ENCODE measurements at regions of chr17 and their contacts with region 1.

Region 1: DNA sequence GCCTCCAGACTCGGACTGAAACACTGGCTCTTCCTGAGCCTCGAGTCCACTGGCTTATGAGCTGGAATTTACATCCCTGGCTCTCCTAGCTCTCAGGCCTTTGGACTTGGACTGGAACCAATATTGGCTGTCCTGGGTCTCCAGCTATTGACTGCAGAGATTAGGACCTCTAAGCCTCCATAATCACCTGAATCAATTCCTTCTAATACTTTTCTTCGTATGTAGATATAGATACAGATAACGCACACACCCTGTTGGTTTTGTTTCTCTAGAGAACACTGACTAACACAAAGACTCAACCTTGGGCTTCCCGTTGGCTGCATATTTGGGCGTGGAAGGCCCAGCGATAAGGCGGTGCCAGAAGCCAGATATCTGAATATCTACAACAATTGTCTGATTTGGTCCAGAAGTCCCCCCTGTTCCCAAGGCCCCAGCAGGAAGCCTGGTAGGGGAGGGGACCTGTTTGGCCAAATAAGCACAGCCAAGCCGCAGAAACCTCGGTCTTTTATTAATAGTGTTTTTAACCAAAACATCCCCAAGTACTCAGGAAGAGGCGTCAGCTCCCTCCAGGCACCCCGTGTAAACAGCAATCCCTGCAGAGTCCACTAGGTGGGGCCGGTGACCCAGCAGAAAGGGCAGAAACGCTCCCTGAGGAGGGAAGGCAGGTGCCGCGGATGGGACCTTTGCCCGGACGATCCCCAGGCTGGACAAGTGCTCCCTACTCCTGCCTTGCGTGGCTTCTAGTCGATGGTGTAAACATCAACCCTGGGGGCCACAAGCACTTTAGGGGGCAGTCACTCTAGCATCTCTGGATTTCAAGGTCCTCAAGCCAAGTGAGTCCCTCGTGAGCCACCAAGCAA is 57.0 kb downstream of the ABR start:
- DNase-seq: peak; percentile 88
- ATAC-seq: peak; percentile 88
- H3K4me3 Mint-ChIP-seq: no peak overlapping the region
- H3K27ac Mint-ChIP-seq: no peak overlapping the region
- H3K4me1 Mint-ChIP-seq: peaks cover 28% of the 10 kb centered on the region
- H3K27me3 Mint-ChIP-seq: no peaks in the 10 kb centered on the region

Region 2: DNA sequence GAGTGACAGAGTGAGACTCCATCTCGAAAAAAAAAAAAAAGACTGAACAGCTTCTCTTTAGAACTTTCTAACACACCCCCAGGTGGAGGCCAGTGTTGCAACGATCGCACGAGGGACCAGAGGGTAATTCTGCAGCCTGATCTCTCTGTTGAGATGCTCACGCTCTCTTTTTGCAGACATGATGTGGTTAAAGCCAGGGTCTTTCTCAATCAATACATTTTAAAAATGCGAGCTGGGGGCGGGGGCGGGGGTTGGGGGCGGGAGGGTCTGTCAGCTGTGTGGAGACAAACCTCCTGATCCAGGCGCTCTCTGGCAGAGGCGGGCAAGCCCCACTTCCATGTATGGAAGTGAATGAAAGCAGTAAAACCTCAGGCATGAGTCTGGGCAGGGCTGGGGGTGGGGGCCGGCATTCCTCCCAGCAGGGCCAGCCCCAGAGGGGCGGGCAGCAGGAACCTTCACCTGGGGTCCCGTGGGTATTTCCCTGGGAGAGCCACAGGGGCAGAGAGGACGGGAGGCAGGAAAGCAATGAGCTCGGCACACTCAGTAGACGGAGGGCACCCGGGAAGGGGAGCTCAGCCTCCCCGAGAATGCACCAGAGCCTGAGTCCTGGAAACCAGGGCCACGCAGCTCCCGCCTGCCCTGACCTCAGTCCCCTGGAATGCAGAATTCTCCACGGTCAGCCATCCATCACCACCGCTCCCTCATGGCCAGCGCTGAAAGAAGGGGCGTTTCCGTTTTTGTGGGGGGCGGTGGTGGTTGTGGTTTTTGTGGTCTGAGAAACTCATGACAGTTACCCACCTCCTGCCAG is 171.2 kb before region 1 on chr17:
- CTCF ChIA-PET with region 1: no interaction called
- POLR2A ChIA-PET with region 1: no interaction called
- DNase-seq: no peak
- ATAC-seq: no peak
- H3K4me3 Mint-ChIP-seq: no peak overlapping the region
- H3K27ac Mint-ChIP-seq: no peak overlapping the region
- H3K4me1 Mint-ChIP-seq: no peaks in the 10 kb centered on the region
- H3K27me3 Mint-ChIP-seq: peaks cover 7% of the 10 kb centered on the region

Region 3: DNA sequence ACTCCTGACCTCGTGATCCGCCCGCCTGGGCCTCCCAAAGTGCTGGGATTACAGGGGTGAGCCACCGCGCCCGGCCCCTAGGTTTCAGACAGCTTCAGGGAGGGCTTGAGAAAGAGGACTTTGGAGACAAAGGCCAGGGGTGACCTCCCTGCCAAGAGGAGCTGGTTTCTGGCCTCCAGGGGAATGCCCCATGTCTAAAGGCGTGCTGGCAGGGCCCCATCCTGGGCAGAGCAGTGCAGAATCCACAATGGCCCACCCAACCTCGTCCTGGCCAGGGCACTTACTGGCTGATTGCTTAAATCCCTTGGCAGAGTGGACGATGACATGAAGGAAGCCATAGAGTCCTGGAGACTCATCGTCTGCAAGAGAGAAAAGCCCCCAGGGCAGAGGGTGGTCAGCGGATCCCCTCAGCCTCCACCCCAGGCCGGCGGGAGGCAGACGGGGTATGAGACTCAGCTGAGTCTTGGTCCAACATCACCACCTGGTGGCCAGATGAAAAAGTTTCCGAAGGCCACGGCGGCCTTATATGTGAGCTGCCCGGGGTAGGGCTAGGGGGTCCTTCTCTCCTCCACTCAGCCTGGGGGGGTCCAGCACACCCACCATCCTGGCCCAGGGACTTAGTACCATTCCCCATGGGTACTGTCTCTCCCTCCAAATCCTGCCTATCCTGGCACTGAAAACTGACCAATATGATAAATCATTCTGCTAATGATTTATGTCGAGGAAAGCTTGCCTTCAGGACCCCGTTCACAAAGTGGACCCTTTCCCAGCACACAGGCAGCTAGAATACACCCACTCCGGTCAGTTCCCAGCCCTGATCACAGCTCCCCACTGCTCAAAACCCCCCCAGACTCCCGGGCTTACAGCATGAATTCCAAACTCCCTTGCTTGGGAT is 66.8 kb before region 1 on chr17:
- CTCF ChIA-PET with region 1: interaction called, 11 read pairs
- POLR2A ChIA-PET with region 1: no interaction called
- DNase-seq: peak; percentile 62
- ATAC-seq: peak; percentile 71
- H3K4me3 Mint-ChIP-seq: no peak overlapping the region
- H3K27ac Mint-ChIP-seq: peak overlapping the region; percentile 32
- H3K4me1 Mint-ChIP-seq: peaks cover 4% of the 10 kb centered on the region
- H3K27me3 Mint-ChIP-seq: no peaks in the 10 kb centered on the region

Region 4: DNA sequence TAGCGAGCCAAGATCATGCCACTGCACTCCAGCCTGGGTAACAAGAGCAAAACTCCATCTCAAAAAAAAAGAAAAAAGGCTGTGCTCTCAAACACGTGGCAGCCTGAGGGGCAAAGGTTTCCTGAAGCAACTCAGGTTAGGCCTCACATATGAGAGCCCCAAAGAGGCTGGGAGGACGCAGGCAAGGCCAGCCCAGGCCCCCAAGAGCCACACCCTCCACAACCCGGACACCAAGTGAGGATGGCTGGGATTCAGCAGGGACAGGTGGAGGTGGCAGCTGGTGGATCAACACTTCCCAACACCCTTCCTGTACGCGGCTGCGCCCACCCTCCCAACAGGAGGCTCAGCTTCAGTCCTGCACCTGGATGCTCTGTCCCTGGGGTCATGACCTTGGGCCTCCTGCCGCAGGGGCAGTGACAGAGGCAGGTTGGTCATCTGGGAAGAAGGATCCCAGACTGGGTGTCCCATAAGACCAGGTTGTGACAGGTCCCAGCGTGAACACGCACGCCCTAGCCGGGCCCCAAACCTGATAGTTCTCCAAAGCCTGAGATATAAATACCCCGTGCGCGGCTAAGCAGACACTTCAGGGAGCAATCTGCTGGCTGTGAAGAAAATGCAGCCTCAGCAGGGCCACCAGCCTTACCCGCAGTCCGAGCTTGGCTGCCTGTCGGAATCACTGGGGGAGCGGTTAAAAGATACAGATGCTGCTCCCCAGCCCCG is 47.7 kb before region 1 on chr17:
- CTCF ChIA-PET with region 1: no interaction called
- POLR2A ChIA-PET with region 1: no interaction called
- DNase-seq: no peak
- ATAC-seq: no peak
- H3K4me3 Mint-ChIP-seq: no peak overlapping the region
- H3K27ac Mint-ChIP-seq: no peak overlapping the region
- H3K4me1 Mint-ChIP-seq: no peaks in the 10 kb centered on the region
- H3K27me3 Mint-ChIP-seq: no peaks in the 10 kb centered on the region

Region 5: DNA sequence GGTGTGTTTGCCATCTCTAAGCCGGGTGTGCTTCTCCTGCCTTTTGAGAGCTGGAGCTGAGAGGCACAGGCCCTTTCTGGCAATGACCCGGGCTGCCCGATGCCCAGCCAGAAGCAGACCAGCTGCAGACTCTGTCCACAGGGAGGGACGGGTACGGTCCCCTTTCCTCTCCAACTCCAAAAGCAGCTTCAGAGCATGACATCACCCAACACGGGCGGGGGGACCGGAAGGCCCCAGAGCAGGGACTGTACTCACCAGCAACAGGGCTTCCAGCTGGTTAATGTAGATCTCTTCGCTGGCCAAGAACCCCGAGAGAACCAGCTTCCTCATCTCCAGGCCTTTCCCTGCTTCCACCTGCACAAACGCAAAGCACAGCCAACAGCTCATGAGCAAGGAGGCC is 22.4 kb before region 1 on chr17:
- CTCF ChIA-PET with region 1: no interaction called
- POLR2A ChIA-PET with region 1: no interaction called
- DNase-seq: no peak
- ATAC-seq: no peak
- H3K4me3 Mint-ChIP-seq: no peak overlapping the region
- H3K27ac Mint-ChIP-seq: no peak overlapping the region
- H3K4me1 Mint-ChIP-seq: peaks cover 38% of the 10 kb centered on the region
- H3K27me3 Mint-ChIP-seq: no peaks in the 10 kb centered on the region

Region 6: GRCh38 chr17:1179818-1180742 is 57.3 kb after region 1 on chr17 and contains the start of gene ABR:
- CTCF ChIA-PET with region 1: interaction called, 31 read pairs
- POLR2A ChIA-PET with region 1: no interaction called
- DNase-seq: peak; percentile 59
- ATAC-seq: peak; percentile 70
- H3K4me3 Mint-ChIP-seq: peak within 1 kb of the TSS; percentile 69
- H3K27ac Mint-ChIP-seq: no peak within 1 kb of the TSS
- H3K4me1 Mint-ChIP-seq: peaks cover 39% of the 10 kb centered on the region
- H3K27me3 Mint-ChIP-seq: peaks cover 16% of the 10 kb centered on the region
- total RNA-seq, gene ABR: 143 to 156 TPM

Region 7: GRCh38 chr17:1197781-1198490 is 75.2 kb after region 1 on chr17:
- CTCF ChIA-PET with region 1: interaction called, 18 read pairs
- POLR2A ChIA-PET with region 1: no interaction called
- DNase-seq: peak; percentile 91
- ATAC-seq: peak; percentile 70
- H3K4me3 Mint-ChIP-seq: peak overlapping the region; percentile 49
- H3K27ac Mint-ChIP-seq: peak overlapping the region; percentile 92
- H3K4me1 Mint-ChIP-seq: peaks cover 78% of the 10 kb centered on the region
- H3K27me3 Mint-ChIP-seq: no peaks in the 10 kb centered on the region

Region 8: DNA sequence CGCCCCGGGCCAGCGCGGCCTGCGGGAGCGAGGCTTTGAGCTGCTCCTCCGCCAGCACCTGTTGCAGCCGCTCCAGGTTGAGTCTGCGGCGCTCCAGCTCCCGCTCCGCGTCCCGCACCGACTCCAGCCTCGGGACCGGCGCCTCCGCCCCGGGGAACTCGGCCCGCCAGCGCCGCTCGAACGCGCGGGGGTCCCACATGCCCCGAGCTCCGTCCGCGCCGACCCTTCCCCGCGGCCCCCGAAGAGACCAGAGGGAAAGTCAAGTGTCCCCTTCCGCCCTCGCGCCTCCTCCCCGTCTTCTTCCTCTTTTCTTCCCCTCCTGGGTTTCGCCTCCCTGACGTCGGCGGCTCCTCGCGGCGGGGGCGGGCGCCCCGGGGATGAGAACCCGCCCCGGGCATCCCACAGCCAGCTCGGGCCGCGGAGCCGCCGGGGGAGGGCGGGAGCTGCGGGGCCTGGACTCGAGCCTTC is 106.7 kb after region 1 on chr17:
- CTCF ChIA-PET with region 1: interaction called, 11 read pairs
- POLR2A ChIA-PET with region 1: no interaction called
- DNase-seq: peak; percentile 61
- ATAC-seq: peak; percentile 75
- H3K4me3 Mint-ChIP-seq: peak overlapping the region; percentile 67
- H3K27ac Mint-ChIP-seq: peak overlapping the region; percentile 60
- H3K4me1 Mint-ChIP-seq: peaks cover 26% of the 10 kb centered on the region
- H3K27me3 Mint-ChIP-seq: peaks cover 36% of the 10 kb centered on the region

Region 9: DNA sequence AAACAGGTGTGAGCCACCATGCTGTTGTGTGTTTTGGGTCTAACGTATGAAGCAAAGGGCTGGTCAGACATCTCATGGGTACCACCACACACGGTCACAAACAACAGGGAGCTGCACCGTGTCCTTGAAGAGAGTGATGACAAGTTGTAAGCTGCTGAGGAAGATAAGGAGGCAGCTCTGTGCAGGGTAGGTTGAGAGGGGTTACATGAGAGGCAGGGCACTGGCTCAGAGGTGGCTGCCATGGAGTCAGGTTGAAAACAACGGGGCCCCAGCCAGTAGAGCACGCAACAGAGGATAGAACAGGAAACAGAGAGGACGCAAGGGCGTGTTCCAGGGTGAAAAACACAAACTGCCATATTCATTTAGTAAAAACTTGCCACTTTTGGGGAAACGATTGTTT is 208.9 kb after region 1 on chr17:
- CTCF ChIA-PET with region 1: interaction called, 16 read pairs
- POLR2A ChIA-PET with region 1: no interaction called
- DNase-seq: peak; percentile 47
- ATAC-seq: peak; percentile 73
- H3K4me3 Mint-ChIP-seq: no peak overlapping the region
- H3K27ac Mint-ChIP-seq: peak overlapping the region; percentile 50
- H3K4me1 Mint-ChIP-seq: peaks cover 10% of the 10 kb centered on the region
- H3K27me3 Mint-ChIP-seq: peaks cover 5% of the 10 kb centered on the region

Measured in activated CD8-positive, alpha-beta T cell treated with anti-CD3 and anti-CD28 coated beads, Interleukin-2, amount 10 ng/mL, durations not matched to agents 7 days and 5 days (primary cell).